A673 (cell line): ENCODE measurements at regions of chr11 and their contacts with region 1.

Region 1: GRCh38 chr11:101848262-101848661 is 66.5 kb upstream of the CEP126 start:
- DNase-seq: peak; percentile 24
- H3K4me3 ChIP-seq: no peak overlapping the region
- H3K27ac ChIP-seq: no peak overlapping the region
- H3K4me1 ChIP-seq: no peaks in the 10 kb centered on the region
- H3K27me3 ChIP-seq: no peaks in the 10 kb centered on the region
- CTCF ChIP-seq: peak; percentile 65; the same call in 1 of the 2 replicates

Region 2: DNA sequence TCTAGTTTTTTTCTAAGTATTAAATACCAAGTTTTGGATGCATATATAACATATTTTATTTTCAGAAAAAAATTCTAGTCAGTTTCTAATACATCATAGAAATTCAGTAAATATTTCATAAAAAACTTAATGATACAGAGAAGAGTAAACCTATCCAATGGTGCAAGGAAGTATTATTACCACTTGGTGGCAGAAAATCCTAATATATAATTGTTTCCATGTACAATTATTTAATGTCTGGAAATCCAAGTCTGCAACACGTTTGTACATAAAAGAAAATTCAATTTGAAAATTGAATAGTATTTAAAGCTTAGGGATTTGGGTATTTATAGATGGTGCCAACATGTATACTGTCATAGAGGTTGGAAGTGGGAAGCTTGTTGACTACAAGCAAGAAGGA is 391.4 kb before region 1 on chr11:
- CTCF ChIA-PET with region 1: no interaction called
- POLR2A ChIA-PET with region 1: no interaction called
- intact Hi-C with region 1: loop called (anchors 2 kb)
- DNase-seq: peak; percentile 37
- H3K4me3 ChIP-seq: no peak overlapping the region
- H3K27ac ChIP-seq: no peak overlapping the region
- H3K4me1 ChIP-seq: no peaks in the 10 kb centered on the region
- H3K27me3 ChIP-seq: no peaks in the 10 kb centered on the region
- CTCF ChIP-seq: peak; percentile 58; the same call in 1 of the 2 replicates

Region 3: GRCh38 chr11:101759771-101760450 is 88.4 kb before region 1 on chr11:
- CTCF ChIA-PET with region 1: no interaction called
- POLR2A ChIA-PET with region 1: no interaction called
- intact Hi-C with region 1: loop called (anchors 2 kb)
- DNase-seq: no peak
- H3K4me3 ChIP-seq: no peak overlapping the region
- H3K27ac ChIP-seq: no peak overlapping the region
- H3K4me1 ChIP-seq: no peaks in the 10 kb centered on the region
- H3K27me3 ChIP-seq: no peaks in the 10 kb centered on the region
- CTCF ChIP-seq: peak; percentile 38; the same call in 1 of the 2 replicates

Region 4: GRCh38 chr11:101860696-101861427 is 12.6 kb after region 1 on chr11:
- CTCF ChIA-PET with region 1: interaction called, 14 read pairs
- POLR2A ChIA-PET with region 1: no interaction called
- intact Hi-C with region 1: no loop called
- DNase-seq: peak; percentile 74
- H3K4me3 ChIP-seq: no peak overlapping the region
- H3K27ac ChIP-seq: no peak overlapping the region
- H3K4me1 ChIP-seq: peaks cover 10% of the 10 kb centered on the region
- H3K27me3 ChIP-seq: no peaks in the 10 kb centered on the region
- CTCF ChIP-seq: peak; percentile 88